ENCODE measurements at regions of chr15 and their contacts with region 1.

Region 1: DNA sequence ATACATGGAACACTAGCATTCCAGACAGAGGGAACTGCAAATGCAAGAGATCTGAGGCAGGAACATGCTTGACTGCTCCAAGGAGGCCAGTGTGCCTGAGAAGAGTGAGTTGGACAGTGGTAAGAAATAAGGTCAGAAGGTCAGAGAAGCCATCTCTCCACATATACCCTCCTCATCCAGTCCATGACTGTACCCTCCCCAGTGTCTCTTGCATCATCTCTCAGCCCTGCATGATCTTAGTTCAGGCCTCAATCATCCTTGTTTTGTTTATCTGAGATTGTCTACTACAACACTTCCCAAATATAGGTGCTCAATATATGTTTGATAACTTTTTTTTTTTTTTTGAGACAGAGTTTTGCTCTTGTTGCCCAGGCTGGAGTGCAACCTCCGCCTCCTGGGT is 5.5 kb upstream of the RSL24D1 start:
- DNase-seq: no peak
- ATAC-seq: no peak
- H3K4me3 ChIP-seq: no peak overlapping the region
- H3K4me3 Mint-ChIP-seq: no peak overlapping the region
- H3K27ac ChIP-seq: no peak overlapping the region
- H3K27ac Mint-ChIP-seq: no peak overlapping the region
- H3K4me1 ChIP-seq: peaks cover 0 to 8% of the 10 kb centered on the region in 2 experiments
- H3K4me1 Mint-ChIP-seq: peaks cover 0 to 9% (median 3%) of the 10 kb centered on the region in 3 donors
- H3K27me3 ChIP-seq: no peaks in the 10 kb centered on the region
- H3K27me3 Mint-ChIP-seq: no peaks in the 10 kb centered on the region

Region 2: GRCh38 chr15:55084216-55084615 is 118.0 kb before region 1 on chr15:
- CTCF ChIA-PET with region 1: no interaction called
- POLR2A ChIA-PET with region 1: no interaction called
- DNase-seq: no peak
- ATAC-seq: no peak
- H3K4me3 ChIP-seq: no peak overlapping the region
- H3K4me3 Mint-ChIP-seq: no peak overlapping the region
- H3K27ac ChIP-seq: no peak overlapping the region
- H3K27ac Mint-ChIP-seq: no peak overlapping the region
- H3K4me1 ChIP-seq: no peaks in the 10 kb centered on the region
- H3K4me1 Mint-ChIP-seq: no peaks in the 10 kb centered on the region
- H3K27me3 ChIP-seq: no peaks in the 10 kb centered on the region
- H3K27me3 Mint-ChIP-seq: peaks cover under 1 to 9% of the 10 kb centered on the region in 2 donors

Region 3: DNA sequence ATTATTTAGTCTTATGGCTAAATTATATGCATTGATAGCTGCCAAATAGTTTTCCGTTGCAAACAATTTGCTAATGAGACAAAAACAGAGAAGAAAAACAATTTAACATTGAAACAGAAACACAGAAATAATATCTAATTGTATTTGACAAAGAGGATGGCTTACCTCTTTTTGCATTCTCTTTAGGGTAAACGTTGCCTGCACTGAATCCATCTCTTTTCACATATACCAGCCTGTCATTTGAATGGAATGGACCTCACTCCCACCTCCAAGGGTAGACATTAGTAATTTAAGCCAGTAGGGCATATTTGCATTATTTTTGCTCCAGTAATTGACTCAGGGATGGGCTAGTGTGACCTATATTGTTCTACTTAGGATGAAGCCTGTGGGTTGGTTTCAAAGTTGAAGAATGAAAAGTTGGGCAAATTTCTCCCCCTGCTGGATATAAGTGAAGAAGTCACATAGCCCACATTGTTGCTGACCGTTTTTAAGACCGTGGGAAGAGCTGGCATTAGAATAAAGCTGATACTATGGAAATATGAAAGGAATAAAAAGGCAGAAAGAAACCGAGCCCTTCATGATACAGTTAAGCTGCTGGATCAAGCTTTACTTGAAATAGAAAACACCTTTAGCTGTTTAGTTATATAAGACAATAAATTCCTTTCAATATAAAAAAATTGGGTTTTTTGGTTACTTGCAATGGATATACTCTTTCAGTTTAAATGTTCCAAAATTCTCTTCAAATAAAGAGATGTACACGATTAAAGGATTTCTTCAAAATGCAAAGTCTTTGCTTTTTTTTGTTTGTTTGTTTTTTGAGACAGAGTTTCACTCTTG is 233.0 kb after region 1 on chr15:
- CTCF ChIA-PET with region 1: interaction called in 1 of 2 experiments, 3 read pairs
- POLR2A ChIA-PET with region 1: interaction called in 1 of 2 experiments, 13 read pairs
- DNase-seq: peak in 3 of 35 experiments; percentile 3 to 63 (median 10)
- ATAC-seq: peak; percentile 43 to 67 (median 58)
- H3K4me3 ChIP-seq: no peak overlapping the region
- H3K4me3 Mint-ChIP-seq: no peak overlapping the region
- H3K27ac ChIP-seq: no peak overlapping the region
- H3K27ac Mint-ChIP-seq: no peak overlapping the region
- H3K4me1 ChIP-seq: no peaks in the 10 kb centered on the region
- H3K4me1 Mint-ChIP-seq: peaks cover 6 to 8% (median 6%) of the 10 kb centered on the region in 3 donors
- H3K27me3 ChIP-seq: no peaks in the 10 kb centered on the region
- H3K27me3 Mint-ChIP-seq: no peaks in the 10 kb centered on the region